ENCODE measurements at regions of chr18 and their contacts with region 1.

Region 1: DNA sequence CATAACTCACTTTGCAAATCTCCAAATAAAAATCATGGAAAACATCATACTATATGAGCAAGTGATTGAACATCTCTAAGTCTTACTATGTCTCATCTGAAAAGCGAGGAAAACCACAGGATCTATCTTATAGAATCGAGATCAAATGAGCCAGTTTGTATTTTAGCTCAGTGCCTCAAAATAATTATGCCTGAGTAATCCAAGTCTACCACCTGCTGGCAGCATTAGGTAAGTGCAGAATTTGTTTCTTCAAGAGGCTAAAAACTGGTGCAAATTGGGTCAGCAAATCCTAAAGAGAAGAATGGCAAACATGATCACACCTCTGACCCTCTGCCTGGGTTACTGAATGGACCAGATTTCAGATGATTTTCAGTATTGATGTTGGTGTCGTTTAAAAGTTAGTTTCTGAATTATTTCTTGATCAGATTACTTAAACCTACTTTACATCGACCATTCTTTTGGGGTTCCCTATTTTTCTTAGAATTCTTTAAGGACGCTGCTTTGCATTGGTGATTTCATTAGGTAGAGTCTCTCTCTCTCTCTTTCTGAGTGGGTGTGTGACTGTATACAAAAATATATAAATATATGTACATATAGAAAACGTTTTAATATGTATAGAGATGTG is 12.7 kb upstream of the FHOD3 start:
- DNase-seq: no peak
- H3K4me3 ChIP-seq: no peak overlapping the region
- H3K27ac ChIP-seq: no peak overlapping the region
- H3K4me1 ChIP-seq: no peaks in the 10 kb centered on the region
- H3K27me3 ChIP-seq: peaks cover 0 to 2% (median 0%) of the 10 kb centered on the region in 4 experiments; a peak in 1 of 7 replicates
- CTCF ChIP-seq: peak in 2 of 3 experiments; percentile 82 to 83; a peak in 3 of 4 replicates
- EP300 ChIP-seq: no peak
- POLR2A ChIP-seq: no peak
- RAD21 ChIP-seq: peak; percentile 99

Region 2: DNA sequence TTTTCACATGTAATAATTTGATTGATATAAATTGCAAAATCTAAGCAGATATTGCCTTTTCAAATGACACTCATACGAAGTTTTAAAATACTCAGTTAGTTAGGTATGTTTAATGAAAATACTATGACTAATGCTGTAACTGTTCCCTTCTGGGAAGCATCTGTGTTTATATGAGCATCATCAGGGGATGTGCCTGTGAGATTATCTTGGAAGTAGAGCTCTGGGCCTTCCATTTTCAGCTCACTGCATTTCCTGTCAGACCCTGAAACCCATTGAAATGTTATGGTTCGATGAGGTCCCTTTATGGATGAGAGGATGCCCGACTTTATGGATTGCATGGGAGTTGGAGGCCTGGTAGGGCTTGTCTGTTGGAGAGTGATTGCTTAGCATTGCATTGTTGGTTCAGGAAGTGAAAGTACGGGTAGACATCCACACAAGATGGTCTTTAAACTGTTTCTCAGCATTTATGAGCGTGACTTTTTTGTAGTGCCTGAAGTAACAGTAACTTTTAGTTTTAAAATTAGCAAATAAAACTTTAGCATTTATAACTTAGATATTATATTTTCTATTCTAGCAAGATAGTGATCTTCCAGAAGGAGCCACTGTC is 126.4 kb before region 1 on chr18:
- CTCF ChIA-PET with region 1: interaction called, 15 read pairs
- POLR2A ChIA-PET with region 1: no interaction called
- DNase-seq: no peak
- H3K4me3 ChIP-seq: no peak overlapping the region
- H3K27ac ChIP-seq: no peak overlapping the region
- H3K4me1 ChIP-seq: no peaks in the 10 kb centered on the region
- H3K27me3 ChIP-seq: no peaks in the 10 kb centered on the region
- CTCF ChIP-seq: no peak
- EP300 ChIP-seq: no peak
- POLR2A ChIP-seq: no peak
- RAD21 ChIP-seq: no peak

Region 3: DNA sequence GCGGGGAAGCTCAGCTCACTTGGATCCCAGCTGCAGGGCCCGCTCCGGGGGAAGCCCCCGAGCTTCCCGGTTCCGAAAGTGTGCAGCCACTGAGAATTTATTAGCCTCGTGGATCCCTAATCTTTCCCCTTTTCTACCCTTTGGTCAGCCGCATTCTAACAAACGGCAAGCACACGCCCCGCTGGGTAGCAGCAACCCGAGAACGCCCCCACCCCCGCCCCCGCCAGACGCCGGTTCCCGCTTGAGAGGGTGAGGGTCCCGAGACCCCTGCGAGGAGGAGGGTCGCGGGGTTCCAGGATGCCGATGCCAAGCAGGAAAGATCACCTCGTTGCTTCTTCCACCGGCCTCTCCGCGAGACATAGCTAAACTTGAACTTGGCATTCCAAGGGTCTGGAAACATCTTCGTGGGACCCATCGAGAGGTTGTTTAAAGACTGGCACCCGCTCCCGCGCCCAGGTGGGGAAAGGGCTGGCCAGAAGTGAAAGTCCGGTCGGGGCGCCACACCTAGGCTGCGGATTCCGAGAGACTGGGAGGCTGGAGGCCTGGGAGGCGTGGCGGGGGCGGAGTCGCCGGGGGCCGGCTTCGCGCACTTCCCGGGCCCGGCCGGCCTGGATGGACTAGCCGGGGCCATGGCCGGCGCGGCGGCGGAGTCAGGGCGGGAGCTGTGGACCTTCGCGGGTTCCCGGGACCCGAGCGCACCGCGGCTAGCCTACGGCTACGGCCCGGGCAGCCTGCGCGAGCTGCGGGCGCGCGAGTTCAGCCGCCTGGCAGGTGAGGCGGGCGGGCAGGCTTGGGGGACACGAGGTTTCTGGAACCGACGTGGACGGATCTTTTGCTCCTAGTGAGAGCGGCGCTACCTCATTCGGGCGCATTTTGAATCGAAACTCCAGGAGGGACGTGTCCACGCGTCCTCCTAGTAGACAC is 97.6 kb before region 1 on chr18 and contains the start of gene MOCOS:
- CTCF ChIA-PET with region 1: interaction called, 35 read pairs
- POLR2A ChIA-PET with region 1: interaction called, 4 read pairs
- DNase-seq: peak in 1 of 2 experiments; percentile 94
- H3K4me3 ChIP-seq: peak within 1 kb of the TSS; percentile 54 to 79 (median 74)
- H3K27ac ChIP-seq: no peak within 1 kb of the TSS
- H3K4me1 ChIP-seq: peaks cover 3 to 13% (median 8%) of the 10 kb centered on the region in 4 experiments
- H3K27me3 ChIP-seq: peaks cover 0 to 39% (median 27%) of the 10 kb centered on the region in 4 experiments; a peak in 6 of 7 replicates
- CTCF ChIP-seq: no peak
- EP300 ChIP-seq: no peak
- POLR2A ChIP-seq: peak in 1 of 2 experiments; percentile 71; a peak in 2 of 3 replicates
- RAD21 ChIP-seq: no peak
- total RNA-seq, gene MOCOS: 5.8 and 6.5 TPM in 2 replicates

Region 4: GRCh38 chr18:36212301-36213171 is 72.2 kb before region 1 on chr18:
- CTCF ChIA-PET with region 1: interaction called, 15 read pairs
- POLR2A ChIA-PET with region 1: no interaction called
- DNase-seq: no peak
- H3K4me3 ChIP-seq: no peak overlapping the region
- H3K27ac ChIP-seq: no peak overlapping the region
- H3K4me1 ChIP-seq: no peaks in the 10 kb centered on the region
- H3K27me3 ChIP-seq: no peaks in the 10 kb centered on the region
- CTCF ChIP-seq: peak in 1 of 3 experiments; percentile 8; a peak in 1 of 4 replicates
- EP300 ChIP-seq: no peak
- POLR2A ChIP-seq: no peak
- RAD21 ChIP-seq: peak; percentile 23 to 48; a peak in 3 of 4 replicates

Region 5: DNA sequence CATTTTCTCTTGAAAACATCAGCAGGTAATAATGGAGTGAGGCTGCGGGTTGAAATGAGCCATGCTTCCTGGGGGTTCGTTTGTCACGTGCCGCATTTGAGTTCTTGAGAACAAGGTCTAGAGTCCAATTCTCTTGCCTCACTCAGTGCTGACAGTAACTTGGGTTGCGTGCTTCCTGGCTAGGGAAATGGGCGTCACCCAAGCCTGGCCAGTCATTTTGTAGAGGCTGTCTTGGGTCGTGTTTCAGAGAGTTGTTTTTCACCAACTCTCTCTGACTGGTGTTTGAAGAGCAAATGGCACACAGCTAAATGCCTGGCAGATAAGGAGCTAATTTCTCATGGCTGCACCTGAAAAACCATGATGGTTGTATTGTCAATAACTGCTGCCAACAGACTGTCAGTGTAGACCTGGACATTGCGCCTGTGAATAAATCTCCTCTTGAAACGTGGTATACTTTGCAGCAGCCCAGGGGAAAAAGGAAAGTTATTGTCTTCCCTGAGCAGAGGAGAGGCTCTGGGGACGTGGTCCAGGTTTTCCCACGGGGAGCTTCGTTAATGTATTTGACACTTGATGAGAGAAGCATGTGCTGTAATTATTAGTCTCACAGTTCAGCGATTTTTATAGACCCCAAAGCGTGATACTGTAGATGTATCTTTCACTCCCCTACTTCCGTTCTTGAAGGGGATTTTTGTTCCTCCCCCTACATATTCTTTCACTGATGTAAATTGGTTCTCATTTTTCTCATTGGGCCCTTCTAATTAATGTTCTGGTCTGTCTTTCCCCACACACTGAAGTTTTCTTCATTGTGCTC is 208.8 kb after region 1 on chr18:
- CTCF ChIA-PET with region 1: no interaction called
- POLR2A ChIA-PET with region 1: no interaction called
- DNase-seq: no peak
- H3K4me3 ChIP-seq: no peak overlapping the region
- H3K27ac ChIP-seq: no peak overlapping the region
- H3K4me1 ChIP-seq: peaks cover 0 to 10% (median 7%) of the 10 kb centered on the region in 4 experiments; a peak in 6 of 7 replicates
- H3K27me3 ChIP-seq: no peaks in the 10 kb centered on the region
- CTCF ChIP-seq: no peak
- EP300 ChIP-seq: no peak
- POLR2A ChIP-seq: no peak
- RAD21 ChIP-seq: no peak

Measured in H1 (cell line).